MCF 10A (cell line): ENCODE measurements at regions of chr4 and their contacts with region 1.

Region 1: GRCh38 chr4:41692717-41693345 is 55.7 kb downstream of the PHOX2B start:
- DNase-seq: peak; percentile 68
- H3K4me3 Mint-ChIP-seq: no peak overlapping the region
- H3K27ac Mint-ChIP-seq: peak overlapping the region; percentile 65
- H3K4me1 Mint-ChIP-seq: peaks cover 12% of the 10 kb centered on the region
- H3K27me3 Mint-ChIP-seq: no peaks in the 10 kb centered on the region
- CTCF ChIP-seq: peak; percentile 91

Region 2: DNA sequence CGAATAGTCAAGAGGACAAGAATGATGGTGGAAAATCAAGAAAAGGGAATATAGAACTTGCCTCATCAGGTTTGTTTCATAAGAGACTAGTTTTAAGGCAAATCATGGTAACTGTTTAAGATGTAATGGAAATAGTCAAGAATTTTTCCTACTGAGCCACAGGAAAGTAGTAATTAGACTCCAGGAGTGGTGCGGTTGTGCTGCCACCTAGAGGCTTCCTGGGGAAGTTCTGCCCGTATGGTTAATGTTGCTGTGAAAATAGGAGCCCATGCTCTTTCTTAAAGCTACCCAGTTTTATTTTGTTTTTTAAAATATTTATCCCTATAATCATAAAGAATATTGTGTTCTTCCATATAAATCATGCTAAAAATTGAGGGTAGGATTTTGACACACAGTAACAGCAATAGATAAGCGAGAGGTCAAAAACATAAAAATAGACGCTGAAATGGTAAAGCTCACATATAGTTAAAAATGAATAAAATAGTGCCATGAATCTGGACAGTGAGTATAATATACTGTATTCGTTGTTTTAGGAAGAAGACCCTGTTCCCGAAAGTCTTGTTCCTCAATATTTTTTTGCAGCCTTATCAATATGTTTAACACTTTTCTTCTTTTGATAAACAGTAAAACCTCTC is 31.3 kb before region 1 on chr4:
- CTCF ChIA-PET with region 1: no interaction called
- POLR2A ChIA-PET with region 1: no interaction called
- intact Hi-C with region 1: loop called (anchors 1 kb)
- DNase-seq: peak; percentile 70
- H3K4me3 Mint-ChIP-seq: no peak overlapping the region
- H3K27ac Mint-ChIP-seq: peak overlapping the region; percentile 32
- H3K4me1 Mint-ChIP-seq: no peaks in the 10 kb centered on the region
- H3K27me3 Mint-ChIP-seq: no peaks in the 10 kb centered on the region
- CTCF ChIP-seq: peak; percentile 89

Region 3: DNA sequence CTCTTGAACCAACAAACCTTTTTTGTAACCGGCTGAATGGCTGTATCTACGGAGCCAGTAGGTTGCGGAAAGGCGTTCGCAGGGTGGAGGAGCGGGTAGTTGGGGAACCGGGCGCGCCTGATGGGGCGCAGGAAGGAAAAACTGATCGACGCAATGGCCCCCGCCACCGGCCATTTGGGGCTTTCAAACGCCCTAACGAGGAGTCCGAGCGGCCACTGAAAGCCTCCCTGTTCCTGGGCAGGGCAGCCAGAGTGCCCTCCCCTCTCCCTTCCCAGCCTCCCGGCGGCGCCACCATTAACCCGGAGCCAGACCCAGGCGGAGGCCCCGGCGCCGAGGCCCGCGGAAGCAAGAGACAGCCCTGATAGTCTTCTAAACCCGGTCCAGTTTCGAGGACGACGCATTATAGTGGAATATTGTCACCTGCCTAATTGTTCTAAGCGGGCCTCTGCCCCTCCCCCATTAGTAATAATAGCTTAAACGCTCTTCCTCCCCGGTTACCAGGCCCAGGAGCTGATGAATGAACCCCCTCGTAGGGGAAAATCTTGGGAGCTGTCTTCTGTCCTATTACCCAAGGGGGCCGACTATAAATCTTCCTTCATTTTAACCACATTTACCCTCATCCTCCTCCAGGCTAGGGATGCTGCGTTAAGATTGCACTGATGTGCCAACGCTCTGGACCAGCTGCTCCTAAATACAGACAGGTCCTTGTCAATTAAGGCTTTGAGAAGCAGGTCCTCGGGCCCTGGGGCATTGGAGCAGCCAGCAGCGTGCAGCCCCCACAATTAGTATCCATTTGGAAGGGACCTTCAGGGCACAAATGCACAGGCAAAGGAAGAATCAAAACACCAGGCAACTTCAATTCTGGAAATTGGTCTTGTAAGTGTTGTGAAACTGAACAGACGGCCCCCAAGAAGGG is 180.8 kb after region 1 on chr4:
- CTCF ChIA-PET with region 1: interaction called, 17 read pairs
- POLR2A ChIA-PET with region 1: no interaction called
- intact Hi-C with region 1: no loop called
- DNase-seq: no peak
- H3K4me3 Mint-ChIP-seq: no peak overlapping the region
- H3K27ac Mint-ChIP-seq: peak overlapping the region; percentile 63
- H3K4me1 Mint-ChIP-seq: no peaks in the 10 kb centered on the region
- H3K27me3 Mint-ChIP-seq: no peaks in the 10 kb centered on the region
- CTCF ChIP-seq: no peak

Region 4: GRCh38 chr4:41887821-41888686 is 195.2 kb after region 1 on chr4:
- CTCF ChIA-PET with region 1: interaction called, 193 read pairs
- POLR2A ChIA-PET with region 1: interaction called, 74 read pairs
- intact Hi-C with region 1: loop called (anchors 1 kb)
- DNase-seq: peak; percentile 62
- H3K4me3 Mint-ChIP-seq: no peak overlapping the region
- H3K27ac Mint-ChIP-seq: peak overlapping the region; percentile 57
- H3K4me1 Mint-ChIP-seq: peaks cover 15% of the 10 kb centered on the region
- H3K27me3 Mint-ChIP-seq: no peaks in the 10 kb centered on the region
- CTCF ChIP-seq: peak; percentile 72

Region 5: DNA sequence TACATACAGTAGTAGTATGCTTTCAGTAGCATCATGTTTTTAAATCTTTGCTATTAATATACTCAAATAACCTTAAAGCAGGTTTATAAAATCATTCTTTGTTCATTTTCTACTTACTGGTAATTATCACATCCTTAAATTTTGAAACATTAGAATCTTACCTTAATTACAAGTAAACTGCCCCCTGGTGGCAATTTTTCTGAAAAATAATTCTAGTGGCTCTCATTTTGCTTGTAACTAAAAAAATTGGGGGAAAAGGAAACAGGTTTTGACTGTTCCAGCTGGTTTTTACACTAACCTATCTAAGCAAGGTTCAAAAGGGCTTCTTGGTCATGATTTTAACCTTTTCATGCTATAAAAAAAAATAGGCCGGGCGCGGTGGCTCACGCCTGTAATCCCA is 270.3 kb after region 1 on chr4:
- CTCF ChIA-PET with region 1: interaction called, 5 read pairs
- POLR2A ChIA-PET with region 1: no interaction called
- intact Hi-C with region 1: loop called (anchors 5 kb)
- DNase-seq: peak; percentile 32
- H3K4me3 Mint-ChIP-seq: no peak overlapping the region
- H3K27ac Mint-ChIP-seq: no peak overlapping the region
- H3K4me1 Mint-ChIP-seq: no peaks in the 10 kb centered on the region
- H3K27me3 Mint-ChIP-seq: no peaks in the 10 kb centered on the region
- CTCF ChIP-seq: no peak